ENCODE measurements at regions of chr1 and their contacts with region 1.

Region 1: GRCh38 chr1:22969304-22969709 is 3.4 kb downstream of the LACTBL1 start:
- DNase-seq: peak; percentile 90
- ATAC-seq: peak; percentile 88
- H3K4me3 ChIP-seq: no peak overlapping the region
- H3K27ac ChIP-seq: no peak overlapping the region
- H3K4me1 ChIP-seq: peaks cover 2% of the 10 kb centered on the region; the same call in 1 of the 2 replicates
- H3K27me3 ChIP-seq: peaks cover 49% of the 10 kb centered on the region
- CTCF ChIP-seq: no peak
- POLR2A ChIP-seq: no peak
- RAD21 ChIP-seq: no peak

Region 2: GRCh38 chr1:22665752-22666151 is 303.6 kb before region 1 on chr1:
- CTCF ChIA-PET with region 1: no interaction called
- POLR2A ChIA-PET with region 1: no interaction called
- dilution Hi-C with region 1: no loop called
- in situ Hi-C with region 1: no loop called
- intact Hi-C with region 1: loop called (anchors 10 kb)
- DNase-seq: peak; percentile 43
- ATAC-seq: peak; percentile 87
- H3K4me3 ChIP-seq: no peak overlapping the region
- H3K27ac ChIP-seq: no peak overlapping the region
- H3K4me1 ChIP-seq: no peaks in the 10 kb centered on the region
- H3K27me3 ChIP-seq: peaks cover 76% of the 10 kb centered on the region
- CTCF ChIP-seq: peak; percentile 69
- POLR2A ChIP-seq: no peak
- RAD21 ChIP-seq: peak; percentile 88

Region 3: GRCh38 chr1:22880174-22880601 is 89.1 kb before region 1 on chr1:
- CTCF ChIA-PET with region 1: no interaction called
- POLR2A ChIA-PET with region 1: no interaction called
- dilution Hi-C with region 1: no loop called
- in situ Hi-C with region 1: no loop called
- intact Hi-C with region 1: no loop called
- DNase-seq: peak; percentile 70
- ATAC-seq: peak; percentile 87
- H3K4me3 ChIP-seq: no peak overlapping the region
- H3K27ac ChIP-seq: no peak overlapping the region
- H3K4me1 ChIP-seq: peaks cover 5% of the 10 kb centered on the region
- H3K27me3 ChIP-seq: no peaks in the 10 kb centered on the region
- CTCF ChIP-seq: no peak
- POLR2A ChIP-seq: no peak
- RAD21 ChIP-seq: no peak